Common myeloid progenitor, CD34-positive (primary cell): ENCODE measurements at regions of chr2 and their contacts with region 1.

Region 1: GRCh38 chr2:223970343-223971128 is 13.3 kb downstream of the MRPL44 start:
- DNase-seq: peak; percentile 64 to 84 (median 74)
- H3K4me3 ChIP-seq: no peak overlapping the region
- H3K27ac ChIP-seq: no peak overlapping the region
- H3K4me1 ChIP-seq: no peaks in the 10 kb centered on the region
- H3K27me3 ChIP-seq: no peaks in the 10 kb centered on the region

Region 2: GRCh38 chr2:223369889-223370288 is 600.6 kb before region 1 on chr2:
- CTCF ChIA-PET with region 1: no interaction called
- POLR2A ChIA-PET with region 1: no interaction called
- DNase-seq: no peak
- H3K4me3 ChIP-seq: no peak overlapping the region
- H3K27ac ChIP-seq: no peak overlapping the region
- H3K4me1 ChIP-seq: no peaks in the 10 kb centered on the region
- H3K27me3 ChIP-seq: no peaks in the 10 kb centered on the region

Region 3: DNA sequence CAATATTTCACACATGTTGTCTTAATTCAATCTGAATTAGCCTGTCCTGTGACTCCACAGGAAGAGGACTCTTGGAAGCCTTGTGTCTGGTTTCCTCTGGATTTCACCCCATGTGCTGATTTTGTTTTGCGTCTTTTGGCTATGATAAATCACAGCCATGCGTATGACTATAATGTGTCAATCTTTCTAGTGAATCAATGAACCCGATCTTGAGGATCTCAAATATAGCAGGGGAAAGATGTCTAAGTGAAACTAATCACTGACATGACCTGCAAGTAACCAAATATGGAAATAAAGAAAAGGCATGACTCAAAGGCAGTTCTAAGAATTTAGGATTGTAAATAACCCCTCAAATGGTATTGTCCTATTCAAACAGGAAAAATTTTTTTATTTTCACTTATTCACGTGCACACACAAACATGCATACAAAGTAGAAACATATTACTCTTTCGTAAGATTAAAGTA is 33.6 kb before region 1 on chr2:
- CTCF ChIA-PET with region 1: no interaction called
- POLR2A ChIA-PET with region 1: no interaction called
- DNase-seq: no peak
- H3K4me3 ChIP-seq: no peak overlapping the region
- H3K27ac ChIP-seq: no peak overlapping the region
- H3K4me1 ChIP-seq: peaks cover 0 to 9% (median 0%) of the 10 kb centered on the region in 4 experiments
- H3K27me3 ChIP-seq: no peaks in the 10 kb centered on the region

Region 4: DNA sequence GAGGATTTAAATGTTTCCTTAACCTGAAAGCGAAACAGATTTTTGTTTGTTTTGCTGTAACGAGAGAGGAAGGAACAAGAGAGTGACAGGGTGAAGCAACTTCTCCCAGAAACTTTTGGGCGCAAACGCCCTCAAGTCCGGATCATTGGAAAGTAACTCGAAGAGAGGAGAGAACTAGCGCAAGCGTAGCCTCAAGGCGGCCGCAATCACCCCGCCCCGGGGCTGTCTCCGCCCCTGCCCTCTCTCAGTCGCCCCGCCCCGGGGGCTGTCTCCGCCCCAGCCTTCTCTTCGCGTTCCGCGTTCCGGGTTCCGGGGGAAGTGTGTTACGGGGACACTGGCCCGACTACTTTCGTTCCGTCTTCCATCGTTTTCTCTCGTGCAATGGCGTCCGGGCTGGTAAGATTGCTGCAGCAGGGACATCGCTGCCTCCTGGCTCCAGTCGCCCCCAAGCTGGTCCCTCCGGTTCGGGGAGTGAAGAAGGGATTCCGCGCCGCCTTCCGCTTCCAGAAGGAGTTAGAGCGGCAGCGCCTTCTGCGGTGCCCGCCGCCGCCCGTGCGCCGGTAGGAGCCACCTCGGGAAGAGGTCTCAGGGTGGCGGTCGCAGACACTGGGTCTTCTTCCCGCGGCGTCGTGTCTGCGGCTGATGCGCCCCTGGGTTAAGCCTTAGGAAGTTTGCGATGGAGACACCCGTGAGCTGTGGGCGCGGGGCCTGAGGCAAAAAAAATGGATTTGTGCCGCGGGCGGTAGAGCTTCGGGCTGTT is 13.3 kb before region 1 on chr2 and contains the start of gene MRPL44:
- CTCF ChIA-PET with region 1: interaction called, 24 read pairs
- POLR2A ChIA-PET with region 1: interaction called, 3 read pairs
- DNase-seq: peak; percentile 94 to 97 (median 95)
- H3K4me3 ChIP-seq: peak within 1 kb of the TSS; percentile 93 to 99 (median 97)
- H3K27ac ChIP-seq: peak within 1 kb of the TSS; percentile 69 to 86
- H3K4me1 ChIP-seq: peaks cover 28 to 49% (median 36%) of the 10 kb centered on the region in 4 experiments
- H3K27me3 ChIP-seq: no peaks in the 10 kb centered on the region

Region 5: GRCh38 chr2:224062481-224063297 is 92.2 kb after region 1 on chr2:
- CTCF ChIA-PET with region 1: interaction called, 18 read pairs
- POLR2A ChIA-PET with region 1: no interaction called
- DNase-seq: peak; percentile 26 to 35 (median 28)
- H3K4me3 ChIP-seq: no peak overlapping the region
- H3K27ac ChIP-seq: no peak overlapping the region
- H3K4me1 ChIP-seq: no peaks in the 10 kb centered on the region
- H3K27me3 ChIP-seq: no peaks in the 10 kb centered on the region

Region 6: DNA sequence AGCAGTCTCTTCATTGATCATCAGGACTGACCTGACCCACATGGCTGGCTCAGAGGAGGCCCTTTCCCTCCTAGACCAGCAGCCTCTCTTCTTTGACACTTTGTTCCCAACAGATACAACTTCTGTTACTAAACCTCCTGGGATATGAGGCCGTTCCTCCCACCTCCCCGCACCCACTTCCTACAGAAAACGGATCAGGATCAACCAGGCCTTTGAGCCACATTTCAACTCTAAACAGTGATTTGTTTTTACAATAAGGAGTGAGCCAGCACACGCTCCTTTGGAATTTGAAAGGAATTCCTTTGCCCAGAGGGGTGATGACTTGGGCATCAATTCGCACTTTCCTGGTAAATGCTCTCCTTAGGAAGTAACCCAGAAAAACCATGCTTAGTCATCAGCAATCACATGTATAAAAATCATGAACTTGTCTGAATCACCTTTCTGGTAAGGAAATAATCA is 250.9 kb after region 1 on chr2:
- CTCF ChIA-PET with region 1: no interaction called
- POLR2A ChIA-PET with region 1: no interaction called
- DNase-seq: no peak
- H3K4me3 ChIP-seq: no peak overlapping the region
- H3K27ac ChIP-seq: no peak overlapping the region
- H3K4me1 ChIP-seq: no peaks in the 10 kb centered on the region
- H3K27me3 ChIP-seq: peaks cover 0 to 3% (median 0%) of the 10 kb centered on the region in 5 experiments

Region 7: GRCh38 chr2:224284134-224284946 is 313.8 kb after region 1 on chr2:
- CTCF ChIA-PET with region 1: interaction called, 144 read pairs
- POLR2A ChIA-PET with region 1: interaction called, 3 read pairs
- DNase-seq: peak; percentile 27 to 55 (median 31)
- H3K4me3 ChIP-seq: no peak overlapping the region
- H3K27ac ChIP-seq: no peak overlapping the region
- H3K4me1 ChIP-seq: no peaks in the 10 kb centered on the region
- H3K27me3 ChIP-seq: peaks cover 0 to 5% (median 0%) of the 10 kb centered on the region in 5 experiments